CD8-positive, alpha-beta T cell (primary cell): ENCODE measurements at regions of chr4 and their contacts with region 1.

Region 1: GRCh38 chr4:153438916-153439756 is 27.0 kb upstream of the TMEM131L start:
- DNase-seq: peak in 7 of 9 experiments; percentile 18 to 75 (median 49)
- ATAC-seq: peak; percentile 74
- H3K4me3 ChIP-seq: peak overlapping the region; percentile 45 to 47
- H3K4me3 Mint-ChIP-seq: peak overlapping the region; percentile 80
- H3K27ac ChIP-seq: peak overlapping the region; percentile 38 to 89
- H3K27ac Mint-ChIP-seq: peak overlapping the region; percentile 88
- H3K4me1 ChIP-seq: peaks cover 31% of the 10 kb centered on the region
- H3K4me1 Mint-ChIP-seq: peaks cover 48% of the 10 kb centered on the region
- H3K27me3 ChIP-seq: no peaks in the 10 kb centered on the region
- H3K27me3 Mint-ChIP-seq: no peaks in the 10 kb centered on the region
- CTCF ChIP-seq: no peak

Region 2: GRCh38 chr4:153374442-153374841 is 64.7 kb before region 1 on chr4:
- CTCF ChIA-PET with region 1: no interaction called
- POLR2A ChIA-PET with region 1: no interaction called
- intact Hi-C with region 1: no loop called
- DNase-seq: no peak
- ATAC-seq: no peak
- H3K4me3 ChIP-seq: no peak overlapping the region
- H3K4me3 Mint-ChIP-seq: no peak overlapping the region
- H3K27ac ChIP-seq: no peak overlapping the region
- H3K27ac Mint-ChIP-seq: no peak overlapping the region
- H3K4me1 ChIP-seq: no peaks in the 10 kb centered on the region
- H3K4me1 Mint-ChIP-seq: no peaks in the 10 kb centered on the region
- H3K27me3 ChIP-seq: no peaks in the 10 kb centered on the region
- H3K27me3 Mint-ChIP-seq: no peaks in the 10 kb centered on the region
- CTCF ChIP-seq: no peak

Region 3: GRCh38 chr4:153426207-153426885 is 12.8 kb before region 1 on chr4:
- CTCF ChIA-PET with region 1: interaction called, 5 read pairs
- POLR2A ChIA-PET with region 1: interaction called, 5 read pairs
- intact Hi-C with region 1: loop called in 1 of 2 experiments (anchors 2 kb)
- DNase-seq: peak in 4 of 9 experiments; percentile 9 to 78 (median 40)
- ATAC-seq: peak; percentile 78
- H3K4me3 ChIP-seq: peak overlapping the region in 1 of 2 experiments; percentile 33
- H3K4me3 Mint-ChIP-seq: peak overlapping the region; percentile 40
- H3K27ac ChIP-seq: peak overlapping the region; percentile 55 to 77
- H3K27ac Mint-ChIP-seq: peak overlapping the region; percentile 83
- H3K4me1 ChIP-seq: peaks cover 44% of the 10 kb centered on the region
- H3K4me1 Mint-ChIP-seq: peaks cover 53% of the 10 kb centered on the region
- H3K27me3 ChIP-seq: no peaks in the 10 kb centered on the region
- H3K27me3 Mint-ChIP-seq: no peaks in the 10 kb centered on the region
- CTCF ChIP-seq: no peak

Region 4: DNA sequence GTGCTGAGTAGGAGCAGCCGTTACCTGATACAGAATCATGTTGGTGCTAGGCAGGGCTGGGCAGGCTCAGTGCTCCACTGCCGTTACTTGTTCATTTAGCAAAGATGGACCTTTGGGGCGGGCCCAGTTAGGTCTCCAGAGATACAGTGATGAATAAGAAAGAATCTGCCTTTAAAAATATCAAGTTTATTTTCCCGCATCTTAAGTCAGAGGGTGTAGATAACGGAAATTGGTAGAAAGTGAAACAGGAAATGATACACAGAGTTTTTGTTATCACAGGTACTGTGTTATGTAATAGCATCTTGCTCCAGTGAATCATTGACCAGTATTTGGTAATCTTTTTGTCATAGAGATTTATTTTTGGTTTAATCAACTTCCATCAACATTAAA is 32.5 kb after region 1 on chr4:
- CTCF ChIA-PET with region 1: interaction called, 3 read pairs
- POLR2A ChIA-PET with region 1: interaction called, 3 read pairs
- intact Hi-C with region 1: loop called (anchors 2 to 5 kb)
- DNase-seq: peak in 5 of 9 experiments; percentile 41 to 80 (median 64)
- ATAC-seq: peak; percentile 60
- H3K4me3 ChIP-seq: peak overlapping the region; percentile 49 to 64
- H3K4me3 Mint-ChIP-seq: peak overlapping the region; percentile 95
- H3K27ac ChIP-seq: peak overlapping the region; percentile 76 to 92
- H3K27ac Mint-ChIP-seq: peak overlapping the region; percentile 96
- H3K4me1 ChIP-seq: peaks cover 51% of the 10 kb centered on the region
- H3K4me1 Mint-ChIP-seq: peaks cover 74% of the 10 kb centered on the region
- H3K27me3 ChIP-seq: no peaks in the 10 kb centered on the region
- H3K27me3 Mint-ChIP-seq: no peaks in the 10 kb centered on the region
- CTCF ChIP-seq: no peak